H1 (cell line): ENCODE measurements at regions of chr18 and their contacts with region 1.

Region 1: GRCh38 chr18:3885209-3885792 is 435.3 kb downstream of the TGIF1 start:
- DNase-seq: no peak
- H3K4me3 ChIP-seq: no peak overlapping the region
- H3K27ac ChIP-seq: no peak overlapping the region
- H3K4me1 ChIP-seq: no peaks in the 10 kb centered on the region
- H3K27me3 ChIP-seq: no peaks in the 10 kb centered on the region
- CTCF ChIP-seq: peak in 2 of 3 experiments; percentile 68 to 86; a peak in 3 of 4 replicates
- EP300 ChIP-seq: no peak
- POLR2A ChIP-seq: no peak
- RAD21 ChIP-seq: peak in 1 of 2 experiments; percentile 25; a peak in 1 of 4 replicates

Region 2: GRCh38 chr18:3898861-3899613 is 13.7 kb after region 1 on chr18:
- CTCF ChIA-PET with region 1: interaction called, 37 read pairs
- POLR2A ChIA-PET with region 1: interaction called, 4 read pairs
- DNase-seq: no peak
- H3K4me3 ChIP-seq: no peak overlapping the region
- H3K27ac ChIP-seq: no peak overlapping the region
- H3K4me1 ChIP-seq: 0 out of 7 replicates have a peak, but pooled peaks cover 0 to 3% (median 0%) of the 10 kb centered on the region in 4 experiments
- H3K27me3 ChIP-seq: no peaks in the 10 kb centered on the region
- CTCF ChIP-seq: no peak
- EP300 ChIP-seq: no peak
- POLR2A ChIP-seq: no peak
- RAD21 ChIP-seq: no peak

Region 3: DNA sequence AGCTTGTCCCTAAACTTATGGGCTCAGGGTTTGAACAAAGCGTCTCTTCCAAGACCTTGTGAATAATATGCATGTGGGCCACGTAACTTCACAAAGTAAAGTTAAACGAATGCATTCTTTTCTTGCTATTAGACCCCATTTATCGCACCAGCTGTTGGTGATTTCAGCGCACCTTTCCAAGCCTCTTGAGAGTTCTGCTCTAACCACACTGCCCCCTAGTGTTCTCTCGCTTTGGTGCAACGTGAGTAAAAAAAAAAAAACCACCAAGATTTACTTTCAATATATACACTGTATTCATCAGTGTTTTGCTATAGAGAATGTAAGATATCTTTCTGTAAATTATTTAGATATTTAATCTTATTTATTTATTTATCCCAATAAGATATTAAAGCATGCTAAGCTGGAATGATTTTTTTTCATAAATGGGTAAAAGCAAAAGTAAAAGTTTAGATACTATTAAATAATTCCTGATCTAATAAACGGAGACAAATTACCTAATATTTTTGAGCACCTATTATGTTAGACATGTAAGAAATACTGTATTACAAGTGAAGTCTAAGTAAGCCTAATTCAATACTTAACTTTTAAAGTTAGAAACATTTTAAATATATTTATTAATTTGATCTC is 110.3 kb after region 1 on chr18:
- CTCF ChIA-PET with region 1: interaction called, 12 read pairs
- POLR2A ChIA-PET with region 1: interaction called, 3 read pairs
- DNase-seq: peak in 1 of 2 experiments; percentile 69
- H3K4me3 ChIP-seq: no peak overlapping the region
- H3K27ac ChIP-seq: no peak overlapping the region
- H3K4me1 ChIP-seq: peaks cover 0 to 7% (median 3%) of the 10 kb centered on the region in 4 experiments; a peak in 4 of 7 replicates
- H3K27me3 ChIP-seq: no peaks in the 10 kb centered on the region
- CTCF ChIP-seq: peak; percentile 21 to 66 (median 66)
- EP300 ChIP-seq: no peak
- POLR2A ChIP-seq: no peak
- RAD21 ChIP-seq: peak; percentile 72 to 76